Vagina (tissue), 2 donors: ENCODE measurements at regions of chr12 and their contacts with region 1.

Region 1: DNA sequence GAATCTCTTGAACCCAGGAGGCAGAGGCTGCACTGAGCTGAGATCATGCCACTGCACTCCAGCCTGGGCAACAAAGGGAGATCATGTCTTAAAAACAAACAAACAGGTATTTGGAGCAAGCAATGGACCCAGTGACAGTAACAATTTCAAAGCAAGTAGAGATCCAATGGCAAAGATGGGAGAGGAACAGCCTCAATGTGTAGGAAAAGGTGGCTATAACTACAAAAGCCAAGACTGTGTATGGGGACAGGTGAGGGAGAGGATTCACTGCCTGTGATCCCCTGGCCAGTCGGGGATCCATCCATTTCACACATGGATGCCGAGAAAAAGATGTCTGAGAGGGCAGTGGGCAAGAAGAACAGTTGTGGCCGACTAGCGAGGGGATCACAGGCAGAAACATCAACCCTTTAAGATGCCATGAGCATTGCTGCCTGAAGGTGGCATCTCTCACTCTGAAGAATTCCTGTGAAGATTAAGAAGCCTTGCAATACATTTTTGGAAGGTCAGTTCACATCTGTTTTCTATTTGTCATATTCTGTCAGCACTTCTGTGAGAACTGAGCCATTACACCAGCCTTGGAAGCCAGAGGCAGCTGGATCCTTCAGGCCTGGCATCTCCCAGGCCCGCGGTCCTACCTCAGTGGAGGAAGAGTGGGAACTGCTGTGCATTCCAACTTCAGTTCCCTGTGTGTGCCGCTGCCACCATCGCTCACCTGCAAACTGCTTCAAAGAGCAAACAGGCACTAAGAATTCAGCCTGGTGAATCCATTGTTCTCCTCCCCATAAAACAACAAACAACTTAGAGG is 54.5 kb upstream of the FRS2 start:
- DNase-seq: no peak
- H3K4me3 ChIP-seq: no peak overlapping the region
- H3K27ac ChIP-seq: no peak overlapping the region
- H3K4me1 ChIP-seq: peaks cover 12% of the 10 kb centered on the region
- H3K27me3 ChIP-seq: no peaks in the 10 kb centered on the region
- CTCF ChIP-seq: peak; percentile 57 to 66 (median 57)
- POLR2A ChIP-seq: no peak

Region 2: GRCh38 chr12:69258655-69259054 is 157.0 kb before region 1 on chr12:
- intact Hi-C with region 1: no loop called
- DNase-seq: no peak
- H3K4me3 ChIP-seq: no peak overlapping the region
- H3K27ac ChIP-seq: no peak overlapping the region
- H3K4me1 ChIP-seq: no peaks in the 10 kb centered on the region
- H3K27me3 ChIP-seq: no peaks in the 10 kb centered on the region
- CTCF ChIP-seq: no peak
- POLR2A ChIP-seq: no peak

Region 3: GRCh38 chr12:69570545-69571399 is 155.1 kb after region 1 on chr12:
- intact Hi-C with region 1: loop called (anchors 10 kb)
- DNase-seq: no peak
- H3K4me3 ChIP-seq: no peak overlapping the region
- H3K27ac ChIP-seq: no peak overlapping the region
- H3K4me1 ChIP-seq: no peaks in the 10 kb centered on the region
- H3K27me3 ChIP-seq: no peaks in the 10 kb centered on the region
- CTCF ChIP-seq: peak; percentile 40 to 81 (median 58)
- POLR2A ChIP-seq: no peak